Heart left ventricle (tissue), 16 donors: ENCODE measurements at regions of chr6 and their contacts with region 1.

Region 1: DNA sequence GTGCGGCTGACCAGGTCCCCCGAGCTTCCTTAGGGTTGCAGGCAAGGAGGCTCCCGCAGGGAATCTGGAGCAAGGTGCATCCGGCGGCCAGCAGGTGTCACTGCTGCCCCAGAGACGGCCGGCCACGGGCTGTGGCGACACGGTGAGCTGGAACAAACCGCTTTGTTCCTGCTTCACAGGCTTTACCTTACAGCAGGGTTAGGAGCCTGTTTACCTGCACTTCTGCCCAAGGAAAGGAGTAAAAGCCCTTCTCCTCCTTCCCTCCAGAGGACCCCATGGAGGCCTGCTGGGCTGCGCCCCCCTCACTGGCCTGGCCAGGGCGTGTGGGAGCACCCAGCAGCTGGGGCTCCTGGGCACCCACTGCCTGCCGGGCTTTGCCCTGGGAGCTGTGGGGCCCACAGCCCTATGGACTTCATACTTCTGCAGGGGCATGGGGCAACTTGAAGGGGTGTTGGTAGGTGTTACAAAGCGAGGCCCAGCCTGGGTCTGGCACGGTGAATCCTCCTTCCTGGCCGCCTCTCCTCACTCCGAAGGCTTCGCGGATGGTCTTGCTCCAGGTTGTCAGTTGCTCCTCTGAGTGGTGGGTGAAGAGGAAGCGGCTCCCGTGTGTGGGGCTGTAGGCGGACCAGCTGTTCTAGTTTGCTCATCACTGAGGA is 88.4 kb downstream of the CDC5L start:
- DNase-seq: peak; percentile 72 to 89 (median 78)
- ATAC-seq: peak; percentile 73 to 88 (median 86)
- H3K4me3 ChIP-seq: peak overlapping the region in 2 of 12 donors; percentile 17 to 19
- H3K27ac ChIP-seq: peak overlapping the region in 1 of 12 donors; percentile 38
- H3K4me1 ChIP-seq: peaks cover 0 to 23% (median 9%) of the 10 kb centered on the region in 12 donors
- H3K27me3 ChIP-seq: no peaks in the 10 kb centered on the region
- CTCF ChIP-seq: peak; percentile 86 to 96 (median 93)
- POLR2A ChIP-seq: no peak

Region 2: GRCh38 chr6:44548319-44548718 is 72.4 kb after region 1 on chr6:
- intact Hi-C with region 1: no loop called
- DNase-seq: no peak
- ATAC-seq: no peak
- H3K4me3 ChIP-seq: no peak overlapping the region
- H3K27ac ChIP-seq: no peak overlapping the region
- H3K4me1 ChIP-seq: no peaks in the 10 kb centered on the region
- H3K27me3 ChIP-seq: no peaks in the 10 kb centered on the region
- CTCF ChIP-seq: no peak
- POLR2A ChIP-seq: no peak

Region 3: GRCh38 chr6:44593539-44593944 is 117.6 kb after region 1 on chr6:
- intact Hi-C with region 1: loop called in 1 of 10 experiments (anchors 10 kb)
- DNase-seq: peak in 3 of 5 donors; percentile 18 to 49 (median 32)
- ATAC-seq: peak in 1 of 4 donors; percentile 41
- H3K4me3 ChIP-seq: no peak overlapping the region
- H3K27ac ChIP-seq: no peak overlapping the region
- H3K4me1 ChIP-seq: no peaks in the 10 kb centered on the region
- H3K27me3 ChIP-seq: peaks cover 0 to 3% (median 0%) of the 10 kb centered on the region in 9 donors
- CTCF ChIP-seq: peak; percentile 28 to 59 (median 46)
- POLR2A ChIP-seq: no peak

Region 4: GRCh38 chr6:44649365-44650025 is 173.6 kb after region 1 on chr6:
- intact Hi-C with region 1: loop called in 9 of 10 experiments (anchors 5 to 10 kb)
- DNase-seq: no peak
- ATAC-seq: peak in 1 of 4 donors; percentile 10
- H3K4me3 ChIP-seq: no peak overlapping the region
- H3K27ac ChIP-seq: no peak overlapping the region
- H3K4me1 ChIP-seq: peaks cover 0 to 3% (median 0%) of the 10 kb centered on the region in 12 donors
- H3K27me3 ChIP-seq: peaks cover 0 to 10% (median 0%) of the 10 kb centered on the region in 9 donors
- CTCF ChIP-seq: no peak
- POLR2A ChIP-seq: no peak

Region 5: GRCh38 chr6:45714741-45715507 is 1239.0 kb after region 1 on chr6:
- intact Hi-C with region 1: loop called in 9 of 10 experiments (anchors 1 to 10 kb)
- DNase-seq: peak in 3 of 5 donors; percentile 33 to 54 (median 42)
- ATAC-seq: peak; percentile 85 to 94 (median 94)
- H3K4me3 ChIP-seq: peak overlapping the region in 3 of 12 donors; percentile 12 to 23 (median 22)
- H3K27ac ChIP-seq: no peak overlapping the region
- H3K4me1 ChIP-seq: peaks cover 0 to 15% (median 1%) of the 10 kb centered on the region in 12 donors
- H3K27me3 ChIP-seq: no peaks in the 10 kb centered on the region
- CTCF ChIP-seq: peak; percentile 66 to 88 (median 80)
- POLR2A ChIP-seq: no peak

Region 6: GRCh38 chr6:45922728-45923351 is 1446.9 kb after region 1 on chr6:
- intact Hi-C with region 1: loop called in 5 of 10 experiments (anchors 5 to 10 kb)
- DNase-seq: peak; percentile 58 to 72 (median 62)
- ATAC-seq: peak; percentile 51 to 75 (median 73)
- H3K4me3 ChIP-seq: no peak overlapping the region
- H3K27ac ChIP-seq: peak overlapping the region in 1 of 12 donors; percentile 24
- H3K4me1 ChIP-seq: peaks cover 0 to 58% (median 29%) of the 10 kb centered on the region in 12 donors
- H3K27me3 ChIP-seq: no peaks in the 10 kb centered on the region
- CTCF ChIP-seq: peak; percentile 30 to 71 (median 60)
- POLR2A ChIP-seq: no peak